CD8-positive, alpha-beta T cell (primary cell): ENCODE measurements at regions of chr11 and their contacts with region 1.

Region 1: DNA sequence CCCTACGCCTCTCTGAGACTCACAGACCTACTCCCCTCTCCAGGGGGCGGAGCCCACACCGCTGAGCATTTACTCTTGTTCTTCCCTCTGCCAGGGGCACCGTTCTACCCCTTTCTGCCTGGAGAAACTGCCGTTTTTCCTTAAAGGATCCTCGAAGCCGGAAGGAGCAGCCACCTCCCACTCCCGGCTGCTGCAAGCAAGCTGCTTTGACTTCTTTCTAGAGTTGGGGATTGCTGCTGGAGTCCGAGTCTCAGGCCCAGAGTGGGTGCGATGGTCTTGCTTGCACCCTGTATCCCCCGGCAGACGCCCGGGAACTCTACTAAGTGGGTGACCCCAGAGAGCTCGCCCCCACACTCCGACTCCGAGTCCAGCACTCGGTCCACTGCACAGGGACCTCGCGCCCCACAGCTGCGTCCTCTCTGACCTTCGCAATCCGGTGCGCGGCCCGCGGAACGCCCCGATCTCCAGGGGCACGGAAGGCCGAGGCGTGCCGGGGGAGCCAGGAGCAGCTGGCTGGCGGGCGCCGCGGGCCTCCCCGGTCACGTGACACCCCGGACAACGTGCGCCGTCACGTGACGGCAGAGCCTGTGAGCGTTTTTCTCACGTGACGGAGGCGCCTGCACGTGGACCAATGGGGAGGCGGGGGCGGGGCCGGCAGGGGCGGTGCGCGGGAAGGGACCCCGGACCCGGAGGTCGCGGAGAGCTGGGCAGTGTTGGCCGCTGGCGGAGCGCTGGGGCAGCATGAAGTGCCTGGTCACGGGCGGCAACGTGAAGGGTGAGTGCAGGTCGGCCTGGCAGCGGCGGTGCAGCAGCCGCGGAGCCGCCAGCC is at the start of gene RAD9A:
- DNase-seq: peak; percentile 81 to 97 (median 93)
- ATAC-seq: peak; percentile 77
- H3K4me3 ChIP-seq: peak within 1 kb of the TSS; percentile 77 to 85
- H3K4me3 Mint-ChIP-seq: peak within 1 kb of the TSS; percentile 87
- H3K27ac ChIP-seq: peak within 1 kb of the TSS; percentile 62 to 87
- H3K27ac Mint-ChIP-seq: peak within 1 kb of the TSS; percentile 81
- H3K4me1 ChIP-seq: peaks cover 26% of the 10 kb centered on the region
- H3K4me1 Mint-ChIP-seq: peaks cover 35% of the 10 kb centered on the region
- H3K27me3 ChIP-seq: no peaks in the 10 kb centered on the region
- H3K27me3 Mint-ChIP-seq: no peaks in the 10 kb centered on the region
- CTCF ChIP-seq: no peak
- total RNA-seq, gene RAD9A: 13.7 to 14.1 TPM

Region 2: GRCh38 chr11:66878474-66878873 is 513.0 kb before region 1 on chr11:
- CTCF ChIA-PET with region 1: no interaction called
- POLR2A ChIA-PET with region 1: no interaction called
- intact Hi-C with region 1: no loop called
- DNase-seq: no peak
- ATAC-seq: no peak
- H3K4me3 ChIP-seq: no peak overlapping the region
- H3K4me3 Mint-ChIP-seq: no peak overlapping the region
- H3K27ac ChIP-seq: no peak overlapping the region
- H3K27ac Mint-ChIP-seq: no peak overlapping the region
- H3K4me1 ChIP-seq: peaks cover 12% of the 10 kb centered on the region
- H3K4me1 Mint-ChIP-seq: peaks cover 16% of the 10 kb centered on the region
- H3K27me3 ChIP-seq: no peaks in the 10 kb centered on the region
- H3K27me3 Mint-ChIP-seq: no peaks in the 10 kb centered on the region
- CTCF ChIP-seq: no peak

Region 3: DNA sequence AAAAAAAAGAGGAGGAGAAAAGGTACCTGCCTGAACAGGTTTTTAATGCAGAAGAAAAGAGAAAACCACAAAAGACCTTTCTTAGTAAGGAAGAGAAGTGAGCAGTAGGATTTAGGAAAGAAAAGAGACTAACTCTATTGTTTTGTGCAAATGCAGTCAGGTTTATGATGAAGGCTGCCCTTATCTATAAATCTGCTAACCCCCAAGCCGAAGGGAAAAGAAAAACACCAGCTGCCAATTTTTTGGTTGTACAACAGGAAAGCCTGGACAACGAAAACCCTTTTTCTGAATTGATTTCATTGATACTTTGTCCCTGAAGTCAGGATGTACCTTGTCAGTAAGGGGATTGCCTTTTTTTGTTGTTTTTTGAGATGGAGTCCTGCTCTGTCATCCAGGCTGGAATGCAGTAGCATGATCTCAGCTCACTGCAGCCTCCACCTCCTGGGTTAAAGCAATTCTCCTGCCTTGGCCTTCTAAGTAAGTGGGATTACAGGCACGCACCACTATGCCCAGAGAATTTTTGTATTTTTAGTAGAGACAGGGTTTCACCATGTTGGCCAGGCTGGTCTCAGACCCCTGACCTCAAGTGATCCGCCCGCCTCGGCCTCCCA is 59.3 kb before region 1 on chr11:
- CTCF ChIA-PET with region 1: no interaction called
- POLR2A ChIA-PET with region 1: no interaction called
- intact Hi-C with region 1: no loop called
- DNase-seq: no peak
- ATAC-seq: no peak
- H3K4me3 ChIP-seq: no peak overlapping the region
- H3K4me3 Mint-ChIP-seq: no peak overlapping the region
- H3K27ac ChIP-seq: no peak overlapping the region
- H3K27ac Mint-ChIP-seq: no peak overlapping the region
- H3K4me1 ChIP-seq: no peaks in the 10 kb centered on the region
- H3K4me1 Mint-ChIP-seq: no peaks in the 10 kb centered on the region
- H3K27me3 ChIP-seq: no peaks in the 10 kb centered on the region
- H3K27me3 Mint-ChIP-seq: no peaks in the 10 kb centered on the region
- CTCF ChIP-seq: no peak

Region 4: GRCh38 chr11:67345920-67346799 is 45.4 kb before region 1 on chr11:
- CTCF ChIA-PET with region 1: interaction called, 1,319 read pairs
- POLR2A ChIA-PET with region 1: interaction called, 10 read pairs
- intact Hi-C with region 1: no loop called
- DNase-seq: peak in 2 of 9 experiments; percentile 44 to 60
- ATAC-seq: peak; percentile 75
- H3K4me3 ChIP-seq: no peak overlapping the region
- H3K4me3 Mint-ChIP-seq: peak overlapping the region; percentile 42
- H3K27ac ChIP-seq: no peak overlapping the region
- H3K27ac Mint-ChIP-seq: peak overlapping the region; percentile 76
- H3K4me1 ChIP-seq: peaks cover 40% of the 10 kb centered on the region
- H3K4me1 Mint-ChIP-seq: peaks cover 53% of the 10 kb centered on the region
- H3K27me3 ChIP-seq: no peaks in the 10 kb centered on the region
- H3K27me3 Mint-ChIP-seq: no peaks in the 10 kb centered on the region
- CTCF ChIP-seq: peak; percentile 70

Region 5: GRCh38 chr11:67409261-67409666 is 17.7 kb after region 1 on chr11:
- CTCF ChIA-PET with region 1: interaction called, 12 read pairs
- POLR2A ChIA-PET with region 1: interaction called, 19 read pairs
- intact Hi-C with region 1: loop called in 1 of 2 experiments (anchors 2 kb)
- DNase-seq: peak; percentile 54 to 91 (median 82)
- ATAC-seq: peak; percentile 64
- H3K4me3 ChIP-seq: peak overlapping the region; percentile 66 to 99
- H3K4me3 Mint-ChIP-seq: peak overlapping the region; percentile 95
- H3K27ac ChIP-seq: peak overlapping the region; percentile 69 to 71
- H3K27ac Mint-ChIP-seq: peak overlapping the region; percentile 91
- H3K4me1 ChIP-seq: peaks cover 91% of the 10 kb centered on the region
- H3K4me1 Mint-ChIP-seq: peaks cover 87% of the 10 kb centered on the region
- H3K27me3 ChIP-seq: no peaks in the 10 kb centered on the region
- H3K27me3 Mint-ChIP-seq: no peaks in the 10 kb centered on the region
- CTCF ChIP-seq: no peak

Region 6: DNA sequence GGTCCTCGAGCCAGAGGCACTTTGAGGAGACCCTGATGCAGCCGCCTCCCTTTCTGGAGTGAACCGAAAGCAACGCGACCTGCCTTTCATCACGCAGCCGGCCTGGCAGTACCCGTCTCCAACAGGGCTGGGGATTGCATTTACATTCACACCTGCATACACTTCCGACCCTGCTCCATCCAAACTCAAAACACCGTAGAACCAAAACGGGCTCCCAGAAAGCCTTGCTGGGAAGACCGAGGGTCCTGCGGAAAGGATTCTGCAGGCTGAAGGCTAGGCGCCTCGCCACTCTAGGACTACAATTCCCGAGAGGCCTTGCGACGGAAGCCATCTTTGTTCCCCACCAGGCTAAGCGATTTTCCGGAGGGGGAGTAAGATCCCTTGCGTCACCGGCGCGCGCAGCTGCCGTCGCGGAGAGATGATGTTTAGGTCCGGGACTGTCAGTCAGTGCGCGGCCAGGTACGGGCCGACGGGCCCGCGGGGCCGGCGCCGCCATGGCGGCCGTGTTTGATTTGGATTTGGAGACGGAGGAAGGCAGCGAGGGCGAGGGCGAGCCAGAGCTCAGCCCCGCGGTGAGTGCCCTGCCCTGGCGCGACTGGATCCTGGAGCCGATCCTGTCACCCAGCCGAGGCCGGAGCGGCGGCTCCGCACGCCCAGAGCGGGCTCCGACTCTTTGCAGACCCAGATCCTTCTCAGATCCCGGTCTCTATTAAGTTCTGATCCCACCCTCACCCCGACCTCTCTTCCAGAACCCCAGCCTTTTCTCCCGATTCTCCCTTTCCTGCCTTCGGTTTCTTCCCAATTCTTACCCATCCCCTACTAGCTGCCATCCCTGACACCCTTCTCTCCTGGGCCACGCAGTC is 36.8 kb after region 1 on chr11 and contains the start of gene RPS6KB2:
- CTCF ChIA-PET with region 1: interaction called, 3 read pairs
- POLR2A ChIA-PET with region 1: interaction called, 4 read pairs
- intact Hi-C with region 1: loop called in 1 of 2 experiments (anchors 1 kb)
- DNase-seq: peak; percentile 97 to 100 (median 98)
- ATAC-seq: peak; percentile 89
- H3K4me3 ChIP-seq: peak within 1 kb of the TSS; percentile 67 to 73
- H3K4me3 Mint-ChIP-seq: peak within 1 kb of the TSS; percentile 99
- H3K27ac ChIP-seq: peak within 1 kb of the TSS; percentile 86 to 87
- H3K27ac Mint-ChIP-seq: peak within 1 kb of the TSS; percentile 95
- H3K4me1 ChIP-seq: peaks cover 34% of the 10 kb centered on the region
- H3K4me1 Mint-ChIP-seq: peaks cover 41% of the 10 kb centered on the region
- H3K27me3 ChIP-seq: no peaks in the 10 kb centered on the region
- H3K27me3 Mint-ChIP-seq: no peaks in the 10 kb centered on the region
- CTCF ChIP-seq: no peak
- total RNA-seq, gene RPS6KB2: 71.8 to 76.2 TPM

Region 7: GRCh38 chr11:67468835-67469811 is 77.6 kb after region 1 on chr11 and contains the start of gene TMEM134:
- CTCF ChIA-PET with region 1: interaction called, 7 read pairs
- POLR2A ChIA-PET with region 1: interaction called, 3 read pairs
- intact Hi-C with region 1: loop called (anchors 1 kb)
- DNase-seq: peak; percentile 86 to 97 (median 91)
- ATAC-seq: peak; percentile 81
- H3K4me3 ChIP-seq: peak within 1 kb of the TSS; percentile 80 to 89
- H3K4me3 Mint-ChIP-seq: peak within 1 kb of the TSS; percentile 89
- H3K27ac ChIP-seq: peak within 1 kb of the TSS; percentile 78 to 82
- H3K27ac Mint-ChIP-seq: peak within 1 kb of the TSS; percentile 93
- H3K4me1 ChIP-seq: peaks cover 39% of the 10 kb centered on the region
- H3K4me1 Mint-ChIP-seq: peaks cover 37% of the 10 kb centered on the region
- H3K27me3 ChIP-seq: no peaks in the 10 kb centered on the region
- H3K27me3 Mint-ChIP-seq: no peaks in the 10 kb centered on the region
- CTCF ChIP-seq: peak; percentile 43
- total RNA-seq, gene TMEM134: 41.2 to 48.5 TPM

Region 8: DNA sequence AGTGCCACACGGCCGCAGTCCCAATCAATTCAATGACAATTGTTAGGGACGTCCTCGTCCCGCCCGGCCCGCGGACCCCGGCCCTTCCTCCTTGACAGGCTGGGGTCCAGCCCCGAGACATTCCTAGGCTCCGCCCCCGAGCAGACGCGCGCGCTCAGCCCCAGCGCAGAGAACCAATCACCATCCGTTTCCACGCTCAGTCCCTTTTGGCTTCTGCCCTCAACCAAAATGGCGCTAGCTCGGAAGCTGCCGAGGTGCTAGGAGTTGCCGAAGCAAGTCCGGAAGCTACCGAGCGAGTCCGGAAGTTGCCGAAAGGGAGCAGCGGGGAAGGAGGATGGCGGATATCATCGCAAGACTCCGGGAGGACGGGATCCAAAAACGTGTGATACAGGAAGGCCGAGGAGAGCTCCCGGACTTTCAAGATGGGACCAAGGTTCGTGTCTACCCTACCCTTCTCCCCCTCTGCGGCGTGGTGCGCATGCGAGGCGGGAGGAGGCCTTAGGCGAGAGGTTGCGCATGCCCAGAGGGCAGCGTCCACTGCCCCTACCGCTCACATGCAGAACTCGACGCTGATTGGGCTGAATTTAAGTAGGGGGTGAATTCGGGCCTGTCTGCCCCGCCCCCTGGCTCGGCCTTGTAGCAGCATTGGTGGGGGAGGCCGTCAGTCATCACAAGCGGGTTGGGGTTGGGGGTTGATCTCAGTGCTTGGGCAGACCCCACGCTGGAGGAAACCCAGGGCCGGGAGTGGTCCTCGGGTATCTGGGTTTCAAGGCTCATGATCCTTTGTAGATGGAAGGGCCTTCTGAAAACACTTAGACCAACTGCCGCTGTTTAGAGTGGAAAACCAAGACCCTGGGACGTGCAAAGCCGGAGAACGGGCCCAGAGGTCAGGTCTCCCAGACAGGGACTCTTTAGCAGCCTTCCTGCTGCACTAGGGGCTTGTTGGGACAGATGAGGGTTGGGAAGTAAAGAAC is 91.6 kb after region 1 on chr11 and contains the start of gene AIP:
- CTCF ChIA-PET with region 1: interaction called, 3 read pairs
- POLR2A ChIA-PET with region 1: interaction called, 4 read pairs
- intact Hi-C with region 1: loop called (anchors 1 kb)
- DNase-seq: peak; percentile 94 to 99 (median 97)
- ATAC-seq: peak; percentile 76
- H3K4me3 ChIP-seq: peak within 1 kb of the TSS; percentile 62 to 73
- H3K4me3 Mint-ChIP-seq: peak within 1 kb of the TSS; percentile 93
- H3K27ac ChIP-seq: peak within 1 kb of the TSS; percentile 81 to 89
- H3K27ac Mint-ChIP-seq: peak within 1 kb of the TSS; percentile 99
- H3K4me1 ChIP-seq: peaks cover 48% of the 10 kb centered on the region
- H3K4me1 Mint-ChIP-seq: peaks cover 54% of the 10 kb centered on the region
- H3K27me3 ChIP-seq: no peaks in the 10 kb centered on the region
- H3K27me3 Mint-ChIP-seq: no peaks in the 10 kb centered on the region
- CTCF ChIP-seq: no peak
- total RNA-seq, gene AIP: 109 to 111 TPM

Region 9: GRCh38 chr11:67539550-67539949 is 148.0 kb after region 1 on chr11:
- CTCF ChIA-PET with region 1: no interaction called
- POLR2A ChIA-PET with region 1: no interaction called
- intact Hi-C with region 1: no loop called
- DNase-seq: no peak
- ATAC-seq: no peak
- H3K4me3 ChIP-seq: no peak overlapping the region
- H3K4me3 Mint-ChIP-seq: no peak overlapping the region
- H3K27ac ChIP-seq: no peak overlapping the region
- H3K27ac Mint-ChIP-seq: no peak overlapping the region
- H3K4me1 ChIP-seq: no peaks in the 10 kb centered on the region
- H3K4me1 Mint-ChIP-seq: no peaks in the 10 kb centered on the region
- H3K27me3 ChIP-seq: no peaks in the 10 kb centered on the region
- H3K27me3 Mint-ChIP-seq: no peaks in the 10 kb centered on the region
- CTCF ChIP-seq: no peak

Region 10: DNA sequence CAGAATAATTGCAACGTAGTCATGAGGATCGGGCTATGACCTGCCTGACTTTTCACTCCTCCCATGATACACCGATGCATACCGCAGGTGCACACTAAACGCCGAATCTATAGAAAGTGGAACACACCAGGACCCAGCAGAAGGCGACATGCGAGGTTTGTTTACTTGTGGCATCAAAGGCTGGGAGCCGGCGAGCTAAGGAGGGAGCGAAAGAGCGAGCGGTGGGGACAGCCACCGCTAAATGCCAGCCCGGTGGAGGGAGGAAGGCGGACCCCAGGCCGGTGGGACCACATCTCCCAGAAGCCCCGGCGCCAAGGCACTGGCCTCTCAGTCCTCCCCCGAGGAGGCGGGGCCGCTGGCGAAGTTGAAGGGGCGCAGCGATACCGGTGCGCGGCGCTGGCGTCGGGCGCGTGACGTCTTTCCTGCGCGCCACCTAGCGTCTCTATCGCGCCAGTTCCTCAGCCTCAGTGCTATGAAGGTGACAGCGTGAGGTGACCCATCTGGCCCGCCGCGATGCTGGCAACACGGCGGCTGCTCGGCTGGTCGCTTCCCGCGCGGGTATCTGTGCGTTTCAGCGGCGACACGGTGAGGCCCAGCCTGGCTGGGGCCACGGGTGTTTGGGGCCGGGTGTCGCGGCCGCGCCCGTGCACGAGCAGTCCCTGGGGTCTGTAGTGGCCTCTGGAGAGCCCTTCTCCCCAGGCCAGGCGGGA is 215.1 kb after region 1 on chr11 and contains the start of gene NDUFV1:
- CTCF ChIA-PET with region 1: no interaction called
- POLR2A ChIA-PET with region 1: no interaction called
- intact Hi-C with region 1: loop called in 1 of 2 experiments (anchors 10 kb)
- DNase-seq: peak; percentile 92 to 98 (median 96)
- ATAC-seq: peak; percentile 99
- H3K4me3 ChIP-seq: peak within 1 kb of the TSS; percentile 69
- H3K4me3 Mint-ChIP-seq: peak within 1 kb of the TSS; percentile 91
- H3K27ac ChIP-seq: peak within 1 kb of the TSS; percentile 69 to 71
- H3K27ac Mint-ChIP-seq: peak within 1 kb of the TSS; percentile 89
- H3K4me1 ChIP-seq: peaks cover 21% of the 10 kb centered on the region
- H3K4me1 Mint-ChIP-seq: peaks cover 20% of the 10 kb centered on the region
- H3K27me3 ChIP-seq: no peaks in the 10 kb centered on the region
- H3K27me3 Mint-ChIP-seq: peaks cover 8% of the 10 kb centered on the region
- CTCF ChIP-seq: peak; percentile 59
- total RNA-seq, gene NDUFV1: 220 to 237 TPM